ENCODE measurements at regions of chr4 and their contacts with region 1.

Region 1: DNA sequence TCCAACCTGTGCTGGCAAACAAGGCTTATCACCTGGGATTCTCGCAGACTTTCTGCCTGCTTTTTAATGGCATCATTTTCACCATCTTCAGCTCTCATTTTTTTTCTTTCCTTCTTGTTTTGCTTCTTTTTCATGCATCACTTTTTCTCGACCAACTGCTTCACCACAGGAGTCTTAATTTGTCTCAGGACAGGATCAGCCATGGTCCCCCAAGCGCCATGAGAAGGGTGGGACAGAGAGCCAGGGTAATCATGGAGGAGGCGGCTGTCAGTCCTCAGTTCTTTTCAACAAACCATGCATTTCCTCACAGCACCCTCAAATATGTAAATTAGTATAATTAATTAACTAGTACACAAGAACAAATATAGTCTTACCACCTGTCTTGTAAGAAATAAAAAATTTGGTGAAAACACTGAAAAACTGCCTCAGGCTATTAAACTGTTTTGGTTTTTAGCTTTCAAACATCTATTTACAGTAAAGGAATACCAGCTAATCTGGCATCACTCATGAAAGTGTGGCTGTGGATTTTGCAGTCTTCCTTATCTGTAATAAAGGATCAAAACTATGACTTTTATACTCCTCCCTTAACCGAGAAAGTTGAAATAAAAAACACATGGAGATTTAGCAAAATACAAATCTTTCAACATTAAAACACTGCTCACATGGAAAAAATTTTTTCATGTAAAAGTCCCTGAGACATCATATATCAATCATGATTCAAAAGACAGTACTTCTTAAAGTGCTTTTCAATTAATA is 19.1 kb downstream of the EIF4E start:
- DNase-seq: no peak
- H3K4me3 ChIP-seq: no peak overlapping the region
- CTCF ChIP-seq: no peak

Region 2: GRCh38 chr4:98833384-98833783 is 76.4 kb before region 1 on chr4:
- in situ Hi-C with region 1: loop called (anchors 5 kb)
- DNase-seq: no peak
- H3K4me3 ChIP-seq: no peak overlapping the region
- CTCF ChIP-seq: no peak

Region 3: GRCh38 chr4:99205153-99205979 is 295.5 kb after region 1 on chr4:
- in situ Hi-C with region 1: no loop called
- DNase-seq: no peak
- H3K4me3 ChIP-seq: no peak overlapping the region
- CTCF ChIP-seq: no peak

Measured in astrocyte of the cerebellum (primary cell).